AG04450 (cell line): ENCODE measurements at regions of chr3 and their contacts with region 1.

Region 1: DNA sequence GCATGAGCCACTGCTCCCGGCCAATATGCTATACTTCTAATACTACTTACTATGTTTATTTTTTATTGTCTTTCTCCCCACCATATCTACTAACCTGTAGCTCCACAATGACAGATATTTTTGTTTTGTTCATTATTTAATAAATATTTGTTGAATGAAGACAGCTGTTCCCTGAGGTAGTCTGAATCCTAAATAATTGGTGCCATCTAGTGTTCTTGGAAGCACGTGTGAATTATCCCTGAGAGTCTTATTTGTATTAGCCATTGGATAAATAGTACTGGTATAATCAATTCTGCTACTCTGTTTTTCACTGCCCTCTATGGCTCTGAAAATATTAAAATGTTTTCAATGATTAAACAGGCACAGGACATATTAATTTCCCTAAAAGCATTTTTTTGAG is 5.6 kb upstream of the APPL1 start:
- DNase-seq: no peak
- H3K4me3 ChIP-seq: no peak overlapping the region
- H3K27ac ChIP-seq: no peak overlapping the region
- H3K27me3 ChIP-seq: no peaks in the 10 kb centered on the region
- CTCF ChIP-seq: peak; percentile 38; the same call in 1 of the 2 replicates

Region 2: DNA sequence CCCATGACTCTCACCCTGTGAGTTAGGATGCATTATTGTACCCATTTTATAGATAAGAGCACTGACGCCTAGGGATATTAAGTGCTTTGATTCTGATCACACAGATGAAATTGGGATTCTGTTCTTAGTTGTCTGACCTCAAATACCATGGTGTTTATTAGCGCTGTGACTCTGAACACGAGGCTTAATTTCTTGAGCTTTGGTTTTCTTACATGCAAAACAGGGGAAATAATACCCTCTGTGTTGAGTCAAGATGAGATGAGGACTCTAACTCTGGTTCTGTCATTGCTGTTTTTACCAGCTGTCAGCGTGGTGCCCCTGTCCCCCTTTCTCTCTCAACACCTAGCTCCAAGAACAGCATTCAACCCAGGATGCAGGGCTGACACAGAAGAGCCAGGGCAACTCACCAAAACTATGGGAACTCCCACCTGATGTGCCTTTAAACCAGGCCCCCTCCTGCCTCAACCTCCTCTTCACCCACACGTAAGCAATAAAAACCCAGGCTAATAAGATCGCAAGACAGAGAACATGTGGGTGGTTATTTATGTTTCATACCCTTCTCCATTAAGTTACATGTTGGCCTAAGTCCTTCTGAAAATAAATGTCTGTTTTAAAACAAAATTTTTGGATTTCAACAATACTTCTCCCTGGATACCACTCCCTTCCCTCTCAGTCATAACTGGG is 261.5 kb before region 1 on chr3:
- CTCF ChIA-PET with region 1: no interaction called
- POLR2A ChIA-PET with region 1: no interaction called
- DNase-seq: no peak
- H3K4me3 ChIP-seq: no peak overlapping the region
- H3K27ac ChIP-seq: no peak overlapping the region
- H3K27me3 ChIP-seq: no peaks in the 10 kb centered on the region
- CTCF ChIP-seq: no peak

Region 3: GRCh38 chr3:57100046-57100695 is 121.7 kb before region 1 on chr3:
- CTCF ChIA-PET with region 1: interaction called, 26 read pairs
- POLR2A ChIA-PET with region 1: no interaction called
- DNase-seq: peak; percentile 51
- H3K4me3 ChIP-seq: no peak overlapping the region
- H3K27ac ChIP-seq: no peak overlapping the region
- H3K27me3 ChIP-seq: no peaks in the 10 kb centered on the region
- CTCF ChIP-seq: peak; percentile 95

Region 4: DNA sequence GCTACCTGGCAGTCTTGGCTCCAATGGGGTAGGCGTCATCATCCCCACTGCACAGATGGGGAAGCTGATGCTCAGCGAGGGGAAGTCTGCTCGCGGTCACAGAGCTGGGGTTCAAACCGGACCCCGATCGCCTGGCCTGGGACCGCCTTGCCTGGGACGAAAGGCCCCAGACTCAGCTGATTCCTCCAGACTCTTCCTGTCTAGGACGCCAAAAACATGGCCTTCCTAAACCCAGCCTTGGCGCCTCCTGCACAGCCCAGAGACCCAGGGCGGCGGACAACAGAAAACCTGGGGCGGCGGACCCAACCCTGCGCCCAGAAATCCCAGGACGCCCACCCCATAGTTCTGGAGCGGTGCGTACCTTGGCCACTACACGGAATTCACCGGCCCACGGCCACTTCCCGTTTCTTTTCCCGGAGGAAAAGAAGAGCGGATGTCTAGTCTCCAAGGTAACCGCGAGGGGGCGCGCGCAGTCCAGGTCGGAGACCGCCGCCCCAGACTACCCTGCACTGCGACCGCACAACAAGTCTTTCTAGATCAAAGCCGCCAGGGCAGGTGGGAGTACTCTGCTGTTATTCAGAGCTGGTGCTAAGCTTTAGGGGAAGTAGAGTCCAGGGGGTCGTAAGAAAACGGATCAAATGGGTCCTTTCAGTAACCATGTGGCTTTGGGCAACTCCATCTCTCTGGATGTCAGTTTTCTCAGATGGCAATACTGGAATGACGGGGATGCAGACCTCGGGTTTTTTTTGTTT is 51.8 kb before region 1 on chr3:
- CTCF ChIA-PET with region 1: interaction called, 27 read pairs
- POLR2A ChIA-PET with region 1: no interaction called
- DNase-seq: peak; percentile 8
- H3K4me3 ChIP-seq: peak overlapping the region; percentile 57
- H3K27ac ChIP-seq: no peak overlapping the region
- H3K27me3 ChIP-seq: peaks cover 23% of the 10 kb centered on the region
- CTCF ChIP-seq: peak; percentile 79